Heart left ventricle (tissue), 16 donors: ENCODE measurements at regions of chr9 and their contacts with region 1.

Region 1: GRCh38 chr9:105414947-105415661 is 32.7 kb upstream of the FSD1L start:
- DNase-seq: peak in 3 of 5 donors; percentile 42 to 60 (median 49)
- ATAC-seq: peak; percentile 45 to 82 (median 69)
- H3K4me3 ChIP-seq: no peak overlapping the region
- H3K27ac ChIP-seq: no peak overlapping the region
- H3K4me1 ChIP-seq: peaks cover 0 to 5% (median 0%) of the 10 kb centered on the region in 12 donors
- H3K27me3 ChIP-seq: no peaks in the 10 kb centered on the region
- CTCF ChIP-seq: peak; percentile 77 to 94 (median 86)
- POLR2A ChIP-seq: no peak

Region 2: GRCh38 chr9:104808035-104808614 is 607.0 kb before region 1 on chr9:
- intact Hi-C with region 1: loop called in 3 of 10 experiments (anchors 10 kb)
- DNase-seq: peak in 3 of 5 donors; percentile 27 to 45 (median 36)
- ATAC-seq: peak; percentile 29 to 75 (median 69)
- H3K4me3 ChIP-seq: no peak overlapping the region
- H3K27ac ChIP-seq: no peak overlapping the region
- H3K4me1 ChIP-seq: peaks cover 0 to 9% (median 0%) of the 10 kb centered on the region in 12 donors
- H3K27me3 ChIP-seq: no peaks in the 10 kb centered on the region
- CTCF ChIP-seq: peak in 10 of 12 donors; percentile 15 to 57 (median 40)
- POLR2A ChIP-seq: no peak

Region 3: DNA sequence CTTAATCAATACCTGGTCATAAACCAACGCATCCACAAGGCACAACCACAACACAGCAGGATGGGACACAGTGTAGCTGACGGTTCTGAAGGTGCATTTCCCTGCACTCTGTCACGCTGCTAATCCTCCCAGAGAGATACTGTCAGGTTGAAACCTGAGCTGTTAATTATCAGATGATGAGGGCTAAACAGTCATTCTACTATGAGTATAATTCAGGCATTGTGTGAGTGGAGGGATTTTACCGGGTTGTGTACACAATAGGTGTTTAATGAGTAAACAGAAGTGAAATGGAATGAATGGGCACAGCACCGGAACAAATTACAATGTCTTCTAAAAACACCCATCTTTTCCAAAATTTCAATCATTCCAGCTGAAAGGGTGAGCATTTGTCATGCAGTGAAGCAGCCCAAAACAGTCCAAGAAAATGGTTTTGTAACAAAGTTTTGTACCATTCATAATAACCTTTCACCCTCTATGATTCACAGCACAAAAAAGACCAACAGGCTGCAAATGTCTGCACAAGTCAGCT is 558.6 kb before region 1 on chr9:
- intact Hi-C with region 1: loop called in 9 of 10 experiments (anchors 5 to 10 kb)
- DNase-seq: no peak
- ATAC-seq: no peak
- H3K4me3 ChIP-seq: no peak overlapping the region
- H3K27ac ChIP-seq: no peak overlapping the region
- H3K4me1 ChIP-seq: peaks cover 0 to 37% (median 11%) of the 10 kb centered on the region in 12 donors
- H3K27me3 ChIP-seq: no peaks in the 10 kb centered on the region
- CTCF ChIP-seq: no peak
- POLR2A ChIP-seq: no peak

Region 4: DNA sequence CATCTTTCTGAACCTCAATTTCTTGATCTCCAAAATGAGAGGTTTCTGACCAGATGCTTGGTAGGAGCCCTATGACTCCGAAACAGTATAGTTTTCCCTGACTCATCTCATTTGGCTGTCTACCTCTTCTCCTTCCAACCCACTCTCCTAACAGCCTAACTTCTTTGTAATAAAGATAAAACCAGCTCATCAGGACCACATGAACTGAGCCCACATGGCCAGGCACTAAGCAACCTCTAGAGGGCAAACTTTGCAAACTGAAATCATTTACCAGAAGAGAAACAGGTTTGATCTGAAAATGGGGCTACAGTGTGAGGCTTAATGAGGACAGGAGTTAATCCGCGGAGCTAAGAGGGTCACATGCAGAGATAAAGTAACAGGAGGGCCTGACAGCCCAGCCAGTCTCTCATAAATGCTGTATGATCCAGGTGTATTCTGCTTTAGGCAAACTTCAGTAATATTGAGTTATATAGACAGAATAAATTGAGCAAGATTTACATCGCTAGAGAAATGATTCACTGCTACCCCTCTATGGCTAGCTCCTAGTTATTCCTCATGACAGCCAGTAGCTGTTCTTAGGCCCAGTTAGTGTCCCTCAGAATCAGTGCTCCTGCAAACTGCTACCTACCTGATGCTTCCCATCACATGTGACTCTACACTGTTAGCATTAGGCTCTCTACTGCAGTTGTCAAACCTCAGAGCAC is 551.8 kb before region 1 on chr9:
- intact Hi-C with region 1: loop called (anchors 2 to 10 kb)
- DNase-seq: peak in 2 of 5 donors; percentile 27 to 41
- ATAC-seq: peak; percentile 60 to 81 (median 68)
- H3K4me3 ChIP-seq: no peak overlapping the region
- H3K27ac ChIP-seq: peak overlapping the region in 2 of 12 donors; percentile 26 to 44
- H3K4me1 ChIP-seq: peaks cover 0 to 57% (median 27%) of the 10 kb centered on the region in 12 donors
- H3K27me3 ChIP-seq: no peaks in the 10 kb centered on the region
- CTCF ChIP-seq: peak; percentile 57 to 91 (median 77)
- POLR2A ChIP-seq: no peak

Region 5: DNA sequence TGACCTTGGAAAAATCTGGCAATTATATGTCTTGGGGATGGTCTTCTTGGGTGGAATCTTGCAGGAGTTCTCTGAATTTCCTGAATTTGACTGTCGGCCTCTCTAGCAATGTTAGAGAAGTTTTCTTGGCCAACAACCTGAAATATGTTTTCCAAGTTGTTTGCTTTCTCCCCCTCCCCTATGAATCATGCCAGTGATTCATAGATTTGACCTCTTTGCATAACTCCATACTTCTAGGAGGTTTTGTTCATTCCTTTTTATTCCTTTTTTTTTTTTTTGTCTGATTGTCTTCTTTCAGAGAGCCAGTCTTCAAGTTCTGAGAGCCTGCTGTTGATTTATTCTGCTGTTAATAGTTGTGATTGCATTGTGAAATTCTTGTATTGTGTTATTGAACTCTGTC is 227.3 kb before region 1 on chr9:
- intact Hi-C with region 1: loop called in 1 of 10 experiments (anchors 5 kb)
- DNase-seq: no peak
- ATAC-seq: peak in 1 of 4 donors; percentile 66
- H3K4me3 ChIP-seq: no peak overlapping the region
- H3K27ac ChIP-seq: no peak overlapping the region
- H3K4me1 ChIP-seq: peaks cover 0 to 20% (median 0%) of the 10 kb centered on the region in 12 donors
- H3K27me3 ChIP-seq: no peaks in the 10 kb centered on the region
- CTCF ChIP-seq: no peak
- POLR2A ChIP-seq: no peak

Region 6: GRCh38 chr9:105296889-105297288 is 118.2 kb before region 1 on chr9:
- intact Hi-C with region 1: no loop called
- DNase-seq: no peak
- ATAC-seq: peak; percentile 13 to 62 (median 33)
- H3K4me3 ChIP-seq: no peak overlapping the region
- H3K27ac ChIP-seq: peak overlapping the region in 9 of 12 donors; percentile 16 to 61 (median 37)
- H3K4me1 ChIP-seq: peaks cover 0 to 47% (median 17%) of the 10 kb centered on the region in 12 donors
- H3K27me3 ChIP-seq: no peaks in the 10 kb centered on the region
- CTCF ChIP-seq: no peak
- POLR2A ChIP-seq: no peak